ENCODE measurements at regions of chr15 and their contacts with region 1.

Region 1: GRCh38 chr15:33211176-33211808 is 16.8 kb upstream of the FMN1 start:
- DNase-seq: no peak
- H3K4me3 ChIP-seq: no peak overlapping the region
- H3K27ac ChIP-seq: no peak overlapping the region
- H3K4me1 ChIP-seq: no peaks in the 10 kb centered on the region
- H3K27me3 ChIP-seq: no peaks in the 10 kb centered on the region
- CTCF ChIP-seq: no peak

Region 2: GRCh38 chr15:33194704-33195670 is 16.3 kb before region 1 on chr15 and contains the start of gene FMN1:
- CTCF ChIA-PET with region 1: no interaction called
- POLR2A ChIA-PET with region 1: interaction called, 17 read pairs
- intact Hi-C with region 1: no loop called
- DNase-seq: peak; percentile 75 to 94
- H3K4me3 ChIP-seq: peak within 1 kb of the TSS; percentile 66
- H3K27ac ChIP-seq: peak within 1 kb of the TSS; percentile 57
- H3K4me1 ChIP-seq: peaks cover 8% of the 10 kb centered on the region
- H3K27me3 ChIP-seq: no peaks in the 10 kb centered on the region
- CTCF ChIP-seq: no peak
- total RNA-seq, gene FMN1: 19.6 and 25.8 TPM in 2 replicates

Region 3: GRCh38 chr15:33374226-33374914 is 163.1 kb after region 1 on chr15:
- CTCF ChIA-PET with region 1: no interaction called
- POLR2A ChIA-PET with region 1: no interaction called
- intact Hi-C with region 1: no loop called
- DNase-seq: no peak
- H3K4me3 ChIP-seq: no peak overlapping the region
- H3K27ac ChIP-seq: no peak overlapping the region
- H3K4me1 ChIP-seq: no peaks in the 10 kb centered on the region
- H3K27me3 ChIP-seq: no peaks in the 10 kb centered on the region
- CTCF ChIP-seq: no peak